ENCODE measurements at regions of chr15 and their contacts with region 1.

Region 1: GRCh38 chr15:65212097-65212496 is 824 bp upstream of the CILP start:
- DNase-seq: no peak
- ATAC-seq: peak; percentile 59
- H3K4me3 ChIP-seq: no peak overlapping the region
- H3K27ac ChIP-seq: no peak overlapping the region
- H3K4me1 ChIP-seq: no peaks in the 10 kb centered on the region
- H3K27me3 ChIP-seq: no peaks in the 10 kb centered on the region
- CTCF ChIP-seq: peak; percentile 72; the same call in 1 of the 2 replicates

Region 2: GRCh38 chr15:65233696-65234095 is 21.6 kb after region 1 on chr15:
- CTCF ChIA-PET with region 1: no interaction called
- POLR2A ChIA-PET with region 1: interaction called, 12 read pairs
- in situ Hi-C with region 1: no loop called
- intact Hi-C with region 1: no loop called
- DNase-seq: no peak
- ATAC-seq: no peak
- H3K4me3 ChIP-seq: no peak overlapping the region
- H3K27ac ChIP-seq: no peak overlapping the region
- H3K4me1 ChIP-seq: no peaks in the 10 kb centered on the region
- H3K27me3 ChIP-seq: no peaks in the 10 kb centered on the region
- CTCF ChIP-seq: no peak